ENCODE measurements at regions of chr9 and their contacts with region 1.

Region 1: DNA sequence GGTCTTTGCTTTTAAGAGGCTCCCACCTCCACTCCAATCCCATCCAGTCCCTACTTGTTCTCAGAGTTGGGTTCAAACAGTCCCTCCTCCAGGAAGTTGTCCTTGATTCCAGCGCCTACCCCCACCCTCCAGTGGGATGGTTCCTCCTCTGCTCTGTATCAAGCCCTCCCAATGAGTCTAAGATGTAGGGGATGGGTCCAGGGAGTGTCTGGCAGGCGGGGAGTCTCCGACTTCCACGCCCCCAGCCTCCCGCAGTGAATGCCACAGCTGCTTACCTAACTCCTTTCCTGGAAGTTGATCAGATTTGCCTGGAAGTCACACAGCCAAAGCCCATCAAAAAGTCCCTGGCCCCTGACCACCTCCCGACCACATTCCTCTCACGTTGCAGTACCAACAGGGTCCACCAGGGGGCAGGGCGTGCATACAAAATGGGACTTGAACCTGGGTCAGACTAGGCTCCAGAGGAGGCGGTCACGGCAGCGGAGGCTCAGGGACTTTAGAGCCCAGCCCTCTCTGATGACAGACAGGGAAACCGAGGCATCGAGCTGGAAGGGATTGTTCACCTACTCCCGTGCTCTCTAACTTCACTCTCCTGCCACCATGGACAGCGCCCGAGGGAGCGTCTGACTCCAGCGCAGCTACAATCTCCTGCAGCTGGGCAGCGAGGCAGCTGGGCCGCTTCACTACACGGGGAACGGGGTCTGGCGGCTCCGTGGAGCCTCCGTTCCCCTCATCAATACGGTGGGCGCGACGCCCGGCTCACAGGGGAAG is 25.0 kb upstream of the TDRD7 start:
- H3K4me3 ChIP-seq: no peak overlapping the region
- H3K27ac ChIP-seq: no peak overlapping the region
- H3K4me1 ChIP-seq: no peaks in the 10 kb centered on the region
- CTCF ChIP-seq: peak; percentile 80

Region 2: GRCh38 chr9:96854073-96854876 is 532.6 kb before region 1 on chr9 and contains the start of gene ZNF782:
- CTCF ChIA-PET with region 1: interaction called, 20 read pairs
- POLR2A ChIA-PET with region 1: no interaction called
- H3K4me3 ChIP-seq: peak within 1 kb of the TSS; percentile 84
- H3K27ac ChIP-seq: peak within 1 kb of the TSS; percentile 53; the same call in 1 of the 2 replicates
- H3K4me1 ChIP-seq: no peaks in the 10 kb centered on the region
- CTCF ChIP-seq: 0 out of 2 replicates have a peak, but pooled peaks have one; percentile 16

Region 3: DNA sequence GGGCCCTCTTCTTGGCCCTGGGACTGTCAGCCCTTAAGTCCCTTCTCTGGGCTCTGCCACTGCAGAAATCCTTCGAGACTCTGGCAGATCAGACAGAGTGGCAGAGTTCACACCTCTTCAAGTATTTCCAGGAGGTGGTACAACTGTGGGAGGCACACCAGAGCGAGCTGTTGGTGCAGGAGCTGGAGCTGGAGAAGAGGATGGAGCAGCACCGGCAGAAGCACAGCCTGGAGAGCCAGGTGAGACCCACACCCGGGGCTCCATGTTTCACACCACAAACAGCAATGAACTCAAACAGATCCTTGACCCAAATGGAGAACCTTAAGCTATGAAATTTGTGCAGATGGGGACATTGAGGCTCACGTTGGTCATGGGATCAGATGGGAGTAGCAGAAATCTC is 62.0 kb before region 1 on chr9:
- CTCF ChIA-PET with region 1: no interaction called
- POLR2A ChIA-PET with region 1: no interaction called
- H3K4me3 ChIP-seq: no peak overlapping the region
- H3K27ac ChIP-seq: no peak overlapping the region
- H3K4me1 ChIP-seq: no peaks in the 10 kb centered on the region
- CTCF ChIP-seq: no peak

Region 4: GRCh38 chr9:97376902-97377301 is 10.0 kb before region 1 on chr9:
- CTCF ChIA-PET with region 1: interaction called, 10 read pairs
- POLR2A ChIA-PET with region 1: no interaction called
- H3K4me3 ChIP-seq: no peak overlapping the region
- H3K27ac ChIP-seq: no peak overlapping the region
- H3K4me1 ChIP-seq: no peaks in the 10 kb centered on the region
- CTCF ChIP-seq: no peak

Region 5: DNA sequence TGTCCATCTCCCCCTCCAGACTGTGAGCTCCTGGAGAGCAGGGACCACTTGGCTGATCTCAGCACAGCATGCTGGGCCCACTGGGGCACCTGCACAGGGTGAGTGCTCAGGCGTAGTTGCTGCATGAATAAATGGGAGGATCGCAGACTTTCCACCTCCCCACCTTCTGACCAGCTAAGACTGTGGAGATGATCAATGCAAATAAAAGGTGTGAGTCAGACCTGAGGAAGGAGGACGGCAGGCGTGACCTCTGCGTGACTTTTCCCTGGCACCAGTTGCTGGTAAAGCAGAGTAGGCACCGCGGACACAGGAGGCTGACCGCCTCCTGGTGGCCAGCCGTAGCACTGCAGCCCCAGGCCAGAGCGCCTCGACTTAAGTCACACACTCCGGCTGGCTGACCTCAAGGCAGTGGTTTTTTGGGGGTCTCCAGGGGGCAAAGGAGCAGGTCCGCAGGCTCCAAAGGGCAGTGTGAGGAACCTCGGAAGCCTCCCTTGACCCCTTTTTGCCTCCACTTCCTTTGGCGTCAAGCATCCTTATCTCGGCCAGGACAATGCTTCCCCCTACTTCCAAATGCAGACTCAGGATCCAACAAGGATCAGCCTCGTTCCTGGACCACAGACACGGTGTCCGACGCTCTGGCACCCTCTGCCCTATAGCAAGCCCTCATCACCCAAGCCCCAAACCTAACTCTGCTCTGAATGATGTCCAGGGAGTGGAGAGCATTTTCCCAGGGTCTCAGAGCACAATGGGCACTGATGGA is 12.3 kb after region 1 on chr9:
- CTCF ChIA-PET with region 1: interaction called, 80 read pairs
- POLR2A ChIA-PET with region 1: no interaction called
- H3K4me3 ChIP-seq: no peak overlapping the region
- H3K27ac ChIP-seq: no peak overlapping the region
- H3K4me1 ChIP-seq: no peaks in the 10 kb centered on the region
- CTCF ChIP-seq: peak; percentile 49

Region 6: DNA sequence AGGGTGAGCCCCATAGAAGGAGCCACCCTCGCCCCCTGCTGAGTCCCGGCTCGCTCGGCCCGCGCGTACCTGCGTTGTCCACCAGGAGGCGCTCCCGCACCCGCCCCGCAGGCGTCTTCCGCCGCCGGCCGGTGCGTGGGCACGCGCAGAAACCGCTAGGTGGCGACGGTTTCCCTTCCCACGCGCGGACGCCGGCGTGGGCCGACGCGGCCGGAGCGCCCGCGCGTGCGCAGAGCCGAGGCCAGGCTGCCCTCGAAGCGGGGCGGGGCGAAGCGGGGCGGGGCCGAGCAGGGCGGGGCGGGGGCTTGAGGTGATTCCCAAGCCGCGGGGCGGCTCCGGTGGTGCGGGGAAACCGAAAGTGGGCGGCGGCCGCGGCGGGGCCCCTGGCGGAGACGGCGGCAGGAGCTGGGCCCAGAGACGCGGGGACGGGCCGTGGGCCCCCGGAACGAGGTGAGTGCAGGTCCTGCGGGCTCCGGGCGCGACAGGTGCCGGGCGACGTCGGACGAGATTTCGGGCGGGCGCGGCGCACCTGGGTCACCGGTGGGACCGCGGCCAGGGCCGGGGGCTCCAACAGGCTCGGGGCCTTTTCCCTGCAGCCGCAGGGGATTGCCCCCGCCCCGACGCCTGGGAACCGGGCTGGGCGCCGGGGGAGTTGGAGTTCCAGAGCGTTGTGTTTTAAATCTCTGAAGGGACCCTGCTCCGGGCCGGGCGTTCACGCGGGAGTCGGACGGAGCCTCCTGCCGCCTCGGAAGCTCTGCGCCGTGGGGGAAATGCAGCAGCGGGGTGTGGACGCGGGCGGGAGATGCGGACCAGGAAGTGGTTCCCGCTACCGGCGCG is 25.1 kb after region 1 on chr9 and contains the start of gene TDRD7:
- CTCF ChIA-PET with region 1: interaction called, 22 read pairs
- POLR2A ChIA-PET with region 1: no interaction called
- H3K4me3 ChIP-seq: peak within 1 kb of the TSS; percentile 81
- H3K27ac ChIP-seq: peak within 1 kb of the TSS; percentile 53; the same call in 1 of the 2 replicates
- H3K4me1 ChIP-seq: no peaks in the 10 kb centered on the region
- CTCF ChIP-seq: peak; percentile 79

Region 7: DNA sequence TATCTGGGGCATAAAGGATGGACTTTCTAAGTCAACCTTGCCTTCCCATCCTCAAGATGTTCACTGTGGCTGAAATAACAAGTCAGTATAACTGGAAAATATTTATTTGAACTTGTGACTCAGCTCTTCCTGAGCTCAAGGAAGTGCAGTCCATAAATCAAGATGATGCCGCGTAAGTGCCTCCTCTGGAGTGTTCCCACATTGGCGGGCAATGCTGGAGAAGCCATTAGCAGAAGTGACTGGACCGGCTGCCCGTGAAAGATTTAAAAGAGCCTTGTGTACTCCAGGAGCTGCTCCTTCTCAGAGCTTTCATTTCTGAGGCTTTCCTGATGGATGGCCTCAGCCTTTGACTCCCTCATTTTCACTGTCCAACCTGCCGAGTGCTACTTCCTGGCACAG is 132.0 kb after region 1 on chr9:
- CTCF ChIA-PET with region 1: no interaction called
- POLR2A ChIA-PET with region 1: no interaction called
- H3K4me3 ChIP-seq: no peak overlapping the region
- H3K27ac ChIP-seq: no peak overlapping the region
- H3K4me1 ChIP-seq: peaks cover under 1% of the 10 kb centered on the region; the same call in 1 of the 2 replicates
- CTCF ChIP-seq: no peak